ENCODE measurements at regions of chr4 and their contacts with region 1.

Region 1: GRCh38 chr4:169270810-169271691 is at the start of gene SH3RF1:
- DNase-seq: peak; percentile 94
- ATAC-seq: peak; percentile 97
- total RNA-seq, gene SH3RF1: 5.8 TPM

Region 2: DNA sequence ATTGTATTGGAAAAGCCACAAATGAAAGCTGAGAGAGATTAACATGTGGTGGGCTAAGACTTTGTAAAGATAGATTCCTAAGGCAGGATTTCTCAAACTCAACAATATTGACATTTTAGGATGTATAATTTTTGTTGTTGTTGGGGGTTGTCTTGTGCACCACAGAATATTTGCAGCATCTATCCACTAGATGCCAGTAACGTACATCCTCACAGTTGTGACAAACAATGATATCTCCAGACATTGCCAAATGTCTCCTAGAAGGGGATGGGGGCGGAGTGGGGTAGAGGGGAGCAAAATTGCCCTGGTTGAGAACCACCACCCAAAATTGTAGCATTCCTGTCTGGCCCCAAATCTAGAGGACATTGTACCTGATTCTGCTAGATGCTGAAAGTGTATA is 246.3 kb before region 1 on chr4:
- intact Hi-C with region 1: loop called (anchors 5 kb)
- DNase-seq: no peak
- ATAC-seq: peak; percentile 86

Measured in left ventricle myocardium superior (tissue), 1 donor.